Left cardiac atrium (tissue), 4 donors: ENCODE measurements at regions of chr11 and their contacts with region 1.

Region 1: GRCh38 chr11:6040874-6041273 is 10.3 kb upstream of the OR56A1 start:
- DNase-seq: no peak
- ATAC-seq: no peak

Region 2: DNA sequence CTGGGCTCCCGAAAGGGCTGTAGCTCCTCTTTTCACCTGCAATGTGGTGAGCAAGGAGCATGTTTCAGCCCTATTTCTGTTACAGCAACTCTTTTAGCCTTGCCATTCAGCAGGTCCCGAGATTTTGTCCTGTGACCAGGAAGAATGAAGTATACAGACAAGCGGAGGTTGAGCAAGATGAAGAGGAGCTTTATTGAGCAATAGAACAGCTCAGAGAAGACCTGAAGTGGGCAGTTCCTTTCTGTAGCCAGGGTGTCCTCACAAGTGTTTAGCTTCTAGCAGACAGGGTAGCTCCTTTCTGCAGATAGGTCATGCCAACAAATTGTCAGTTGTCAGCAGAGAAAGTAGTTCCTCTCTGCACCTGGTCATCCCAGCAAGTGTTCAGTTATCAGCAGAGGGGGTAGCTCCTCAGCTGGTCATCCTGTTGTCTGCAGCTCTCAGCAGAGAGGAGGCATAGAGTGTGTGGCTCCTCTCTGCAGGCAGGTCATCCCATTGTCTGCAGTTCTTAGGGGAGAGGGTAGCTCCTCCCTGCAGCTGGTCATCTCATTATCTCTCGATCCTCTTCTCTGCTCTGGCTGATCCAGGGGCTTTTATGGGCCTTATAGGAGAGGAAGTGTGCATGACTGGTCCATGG is 28.7 kb before region 1 on chr11:
- intact Hi-C with region 1: loop called in 1 of 2 experiments (anchors 1 kb)
- DNase-seq: no peak
- ATAC-seq: no peak

Region 3: DNA sequence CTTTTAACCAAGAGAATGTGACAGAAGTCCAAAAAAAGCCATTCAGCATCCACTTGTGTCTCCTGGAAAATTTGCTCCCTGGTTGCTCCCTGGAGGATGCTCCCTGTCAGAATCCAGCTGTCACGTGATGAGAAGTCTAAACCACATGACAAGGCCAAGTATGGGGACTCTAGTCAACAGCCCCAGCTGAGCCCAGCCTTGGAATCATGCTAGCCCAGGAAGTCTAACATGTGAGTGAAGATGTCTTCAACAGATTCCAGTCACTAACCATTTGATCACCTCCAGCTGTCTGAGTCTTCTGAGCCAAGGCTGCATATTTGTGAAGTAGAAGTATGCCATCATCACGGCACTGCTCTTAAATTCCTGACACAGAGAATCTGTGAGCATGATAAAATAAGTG is 70.8 kb after region 1 on chr11:
- intact Hi-C with region 1: no loop called
- DNase-seq: no peak
- ATAC-seq: no peak